ENCODE measurements at regions of chr12 and their contacts with region 1.

Region 1: GRCh38 chr12:48542300-48542928 is 17.0 kb downstream of the OR8S1 start:
- DNase-seq: peak in 2 of 3 donors; percentile 64 to 76
- ATAC-seq: peak; percentile 62
- H3K4me3 ChIP-seq: no peak overlapping the region
- H3K4me1 ChIP-seq: no peaks in the 10 kb centered on the region
- CTCF ChIP-seq: peak; percentile 40

Region 2: GRCh38 chr12:48618541-48618940 is 76.1 kb after region 1 on chr12:
- intact Hi-C with region 1: loop called in 1 of 2 experiments (anchors 5 kb)
- DNase-seq: peak in 2 of 3 donors; percentile 53 to 87
- ATAC-seq: peak; percentile 93
- H3K4me3 ChIP-seq: no peak overlapping the region
- H3K4me1 ChIP-seq: no peaks in the 10 kb centered on the region
- CTCF ChIP-seq: peak; percentile 96

Region 3: GRCh38 chr12:48903982-48904411 is 361.6 kb after region 1 on chr12:
- intact Hi-C with region 1: no loop called
- DNase-seq: peak; percentile 72 to 86 (median 76)
- ATAC-seq: peak; percentile 95
- H3K4me3 ChIP-seq: no peak overlapping the region
- H3K4me1 ChIP-seq: no peaks in the 10 kb centered on the region
- CTCF ChIP-seq: peak; percentile 32

Region 4: GRCh38 chr12:49428793-49429192 is 886.4 kb after region 1 on chr12:
- intact Hi-C with region 1: no loop called
- DNase-seq: no peak
- ATAC-seq: no peak
- H3K4me3 ChIP-seq: no peak overlapping the region
- H3K4me1 ChIP-seq: no peaks in the 10 kb centered on the region
- CTCF ChIP-seq: no peak